CD8-positive, alpha-beta T cell (primary cell): ENCODE measurements at regions of chr13 and their contacts with region 1.

Region 1: DNA sequence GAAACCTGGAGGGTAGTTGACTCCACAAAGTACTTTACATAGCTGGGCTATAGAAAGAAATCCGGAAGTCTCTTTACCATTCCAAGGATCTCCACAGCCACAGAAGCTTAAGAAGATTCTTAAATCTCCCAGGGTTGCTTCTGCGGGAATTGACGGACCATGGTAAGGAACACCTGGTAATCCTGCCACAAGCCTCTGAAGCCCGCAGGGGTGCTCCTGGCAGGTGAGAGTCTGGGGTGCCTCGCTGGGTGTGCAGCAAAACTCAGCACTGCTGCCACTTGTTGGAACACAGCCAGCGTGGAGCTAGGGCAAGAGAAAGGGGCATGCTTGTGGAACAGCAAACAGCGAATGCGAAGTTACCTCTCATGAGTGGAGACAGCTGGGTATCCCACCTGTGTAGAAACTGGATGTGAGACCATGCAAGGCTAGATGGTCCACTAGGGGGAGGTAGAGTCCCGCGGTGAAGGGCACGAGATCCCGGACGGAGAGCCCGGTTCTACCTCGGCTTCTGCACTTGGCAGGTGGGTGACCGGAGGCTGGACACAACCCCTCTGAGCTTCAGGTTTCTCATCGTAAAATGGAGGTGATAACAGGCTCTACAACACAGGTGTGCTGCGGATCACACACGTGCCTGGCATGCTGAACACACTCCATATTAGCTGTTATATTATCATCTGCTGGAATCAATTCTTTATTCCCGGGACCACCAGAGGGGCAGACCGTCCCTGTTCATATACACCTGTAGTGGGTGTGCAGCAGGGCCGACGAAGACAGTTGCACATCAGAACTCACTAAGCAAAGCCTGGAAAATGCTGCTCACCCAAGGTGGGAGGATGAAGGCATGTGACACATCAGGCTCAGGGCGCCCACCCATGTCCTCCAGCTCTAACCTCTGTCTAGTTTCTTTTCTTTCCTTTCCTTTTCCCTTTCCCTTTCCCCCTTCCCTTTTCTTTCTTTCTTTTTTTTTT is 24.1 kb upstream of the UBAC2 start:
- DNase-seq: peak; percentile 58 to 87 (median 82)
- ATAC-seq: peak; percentile 93
- H3K4me3 ChIP-seq: peak overlapping the region in 1 of 2 experiments; percentile 25
- H3K4me3 Mint-ChIP-seq: peak overlapping the region; percentile 72
- H3K27ac ChIP-seq: no peak overlapping the region
- H3K27ac Mint-ChIP-seq: peak overlapping the region; percentile 64
- H3K4me1 ChIP-seq: peaks cover 43% of the 10 kb centered on the region
- H3K4me1 Mint-ChIP-seq: peaks cover 45% of the 10 kb centered on the region
- H3K27me3 ChIP-seq: no peaks in the 10 kb centered on the region
- H3K27me3 Mint-ChIP-seq: no peaks in the 10 kb centered on the region
- CTCF ChIP-seq: peak; percentile 80

Region 2: DNA sequence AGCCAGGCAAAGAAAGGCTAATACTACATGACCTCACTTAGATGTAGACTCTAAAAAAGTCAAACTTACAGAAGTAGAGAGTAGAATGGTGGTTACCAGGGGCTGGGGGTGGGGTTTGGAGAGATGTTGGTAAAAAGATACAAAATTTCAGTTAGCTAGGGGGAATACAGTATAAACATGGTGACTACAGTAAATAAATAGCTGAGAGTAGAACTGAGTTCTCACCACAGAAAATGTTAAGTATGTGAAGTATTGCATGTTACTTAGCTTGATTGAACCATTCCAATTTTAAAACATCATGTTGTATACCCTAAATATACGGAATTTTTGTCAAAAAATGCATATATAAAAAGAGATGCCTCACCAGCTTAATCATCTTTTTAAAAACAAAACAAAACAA is 131.2 kb before region 1 on chr13:
- CTCF ChIA-PET with region 1: interaction called, 4 read pairs
- POLR2A ChIA-PET with region 1: no interaction called
- intact Hi-C with region 1: loop called in 1 of 2 experiments (anchors 2 kb)
- DNase-seq: peak in 1 of 9 experiments; percentile 32
- ATAC-seq: no peak
- H3K4me3 ChIP-seq: no peak overlapping the region
- H3K4me3 Mint-ChIP-seq: peak overlapping the region; percentile 75
- H3K27ac ChIP-seq: peak overlapping the region; percentile 49 to 64
- H3K27ac Mint-ChIP-seq: peak overlapping the region; percentile 91
- H3K4me1 ChIP-seq: peaks cover 87% of the 10 kb centered on the region
- H3K4me1 Mint-ChIP-seq: peaks cover 88% of the 10 kb centered on the region
- H3K27me3 ChIP-seq: no peaks in the 10 kb centered on the region
- H3K27me3 Mint-ChIP-seq: no peaks in the 10 kb centered on the region
- CTCF ChIP-seq: no peak

Region 3: DNA sequence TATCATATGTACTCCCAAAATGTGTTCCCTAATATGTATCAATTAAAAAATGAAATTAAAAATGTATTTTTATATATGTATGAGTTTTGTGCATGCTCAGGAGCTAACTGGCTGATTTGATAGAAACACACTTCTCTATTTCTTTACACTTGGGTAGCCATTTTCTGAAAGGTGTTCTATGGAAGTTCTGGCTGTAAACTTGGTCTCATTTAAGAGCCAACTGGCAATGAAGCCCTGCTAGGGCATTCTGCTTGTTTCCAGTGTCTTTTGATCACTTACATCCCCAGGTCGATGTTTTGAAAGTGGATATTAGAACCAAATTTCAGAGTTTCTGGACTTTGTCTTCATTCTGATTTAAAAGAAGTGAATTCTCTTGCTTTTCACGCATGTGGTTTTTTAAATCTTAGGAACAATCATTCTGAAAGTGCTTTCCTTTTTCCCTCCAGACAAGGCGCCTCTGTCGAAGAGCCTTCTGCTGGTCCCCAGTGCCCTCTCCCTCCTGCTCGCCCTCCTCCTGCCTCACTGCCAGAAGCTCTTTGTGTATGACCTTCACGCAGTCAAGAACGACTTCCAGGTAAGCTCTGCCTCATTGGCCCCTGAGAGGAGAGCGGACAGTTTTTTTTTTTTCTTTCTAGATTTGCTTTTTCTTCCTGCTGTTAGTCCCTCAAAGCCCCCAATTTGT is 61.5 kb after region 1 on chr13:
- CTCF ChIA-PET with region 1: interaction called, 19 read pairs
- POLR2A ChIA-PET with region 1: no interaction called
- intact Hi-C with region 1: no loop called
- DNase-seq: peak in 2 of 9 experiments; percentile 55 to 73
- ATAC-seq: peak; percentile 82
- H3K4me3 ChIP-seq: peak overlapping the region; percentile 47 to 49
- H3K4me3 Mint-ChIP-seq: peak overlapping the region; percentile 92
- H3K27ac ChIP-seq: peak overlapping the region; percentile 52 to 82
- H3K27ac Mint-ChIP-seq: peak overlapping the region; percentile 100
- H3K4me1 ChIP-seq: peaks cover 52% of the 10 kb centered on the region
- H3K4me1 Mint-ChIP-seq: peaks cover 73% of the 10 kb centered on the region
- H3K27me3 ChIP-seq: no peaks in the 10 kb centered on the region
- H3K27me3 Mint-ChIP-seq: no peaks in the 10 kb centered on the region
- CTCF ChIP-seq: no peak

Region 4: GRCh38 chr13:99258210-99258860 is 81.7 kb after region 1 on chr13 and contains the start of gene GPR18:
- CTCF ChIA-PET with region 1: interaction called, 375 read pairs
- POLR2A ChIA-PET with region 1: interaction called, 12 read pairs
- intact Hi-C with region 1: no loop called
- DNase-seq: peak in 4 of 9 experiments; percentile 41 to 80 (median 53)
- ATAC-seq: peak; percentile 77
- H3K4me3 ChIP-seq: peak within 1 kb of the TSS; percentile 55 to 63
- H3K4me3 Mint-ChIP-seq: peak within 1 kb of the TSS; percentile 91
- H3K27ac ChIP-seq: peak within 1 kb of the TSS; percentile 67 to 82
- H3K27ac Mint-ChIP-seq: peak within 1 kb of the TSS; percentile 94
- H3K4me1 ChIP-seq: peaks cover 63% of the 10 kb centered on the region
- H3K4me1 Mint-ChIP-seq: peaks cover 74% of the 10 kb centered on the region
- H3K27me3 ChIP-seq: no peaks in the 10 kb centered on the region
- H3K27me3 Mint-ChIP-seq: no peaks in the 10 kb centered on the region
- CTCF ChIP-seq: no peak
- total RNA-seq, gene GPR18: 31.9 to 36.2 TPM

Region 5: GRCh38 chr13:99380921-99381645 is 204.5 kb after region 1 on chr13:
- CTCF ChIA-PET with region 1: interaction called, 20 read pairs
- POLR2A ChIA-PET with region 1: interaction called, 5 read pairs
- intact Hi-C with region 1: loop called (anchors 2 to 5 kb)
- DNase-seq: peak in 7 of 9 experiments; percentile 41 to 84 (median 75)
- ATAC-seq: peak; percentile 50
- H3K4me3 ChIP-seq: no peak overlapping the region
- H3K4me3 Mint-ChIP-seq: peak overlapping the region; percentile 53
- H3K27ac ChIP-seq: peak overlapping the region; percentile 42 to 72
- H3K27ac Mint-ChIP-seq: peak overlapping the region; percentile 98
- H3K4me1 ChIP-seq: peaks cover 79% of the 10 kb centered on the region
- H3K4me1 Mint-ChIP-seq: peaks cover 93% of the 10 kb centered on the region
- H3K27me3 ChIP-seq: no peaks in the 10 kb centered on the region
- H3K27me3 Mint-ChIP-seq: no peaks in the 10 kb centered on the region
- CTCF ChIP-seq: no peak